ENCODE measurements at regions of chr11 and their contacts with region 1.

Region 1: DNA sequence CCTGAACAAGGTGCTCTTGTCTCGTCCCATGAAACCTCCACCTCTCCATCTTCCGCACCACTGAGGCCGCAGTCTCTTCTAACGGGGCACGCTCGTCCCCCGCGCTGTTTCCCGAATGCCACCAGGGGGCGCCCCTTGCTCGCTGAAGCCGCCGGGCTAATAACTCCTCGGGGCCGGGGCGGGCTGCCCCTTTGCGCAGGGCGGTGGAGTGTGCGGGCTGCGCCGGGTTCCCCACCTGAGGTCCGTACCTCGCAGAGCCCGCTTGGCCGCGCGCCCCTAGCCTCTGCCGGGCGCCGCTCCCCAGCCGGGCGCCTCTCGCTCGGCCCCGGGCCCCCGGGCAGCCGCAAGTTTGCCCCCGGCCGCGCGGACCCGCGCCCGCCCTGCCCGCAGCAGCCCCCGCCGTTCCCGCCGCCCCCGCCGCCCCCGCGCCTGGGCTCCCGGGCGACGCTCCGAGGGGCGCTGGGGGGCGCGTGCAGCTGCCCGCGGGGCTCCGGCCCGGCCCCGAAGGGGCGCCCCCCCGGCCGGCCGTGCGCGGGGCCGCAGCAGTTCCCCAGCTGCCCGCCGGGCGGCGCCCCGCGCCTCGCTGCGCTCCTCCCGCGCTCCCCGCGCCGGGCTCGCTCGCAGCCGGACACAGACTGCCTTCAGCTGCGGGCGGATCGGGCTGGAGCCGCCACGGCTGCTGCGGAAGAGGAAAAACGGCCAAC is at the start of gene GRIK4:
- DNase-seq: peak; percentile 84
- H3K4me3 ChIP-seq: peak within 1 kb of the TSS; percentile 16
- H3K27ac ChIP-seq: no peak within 1 kb of the TSS
- H3K4me1 ChIP-seq: no peaks in the 10 kb centered on the region
- H3K27me3 ChIP-seq: peaks cover 29% of the 10 kb centered on the region
- CTCF ChIP-seq: peak; percentile 87
- total RNA-seq, gene GRIK4: 0.10 to 0.21 TPM

Region 2: DNA sequence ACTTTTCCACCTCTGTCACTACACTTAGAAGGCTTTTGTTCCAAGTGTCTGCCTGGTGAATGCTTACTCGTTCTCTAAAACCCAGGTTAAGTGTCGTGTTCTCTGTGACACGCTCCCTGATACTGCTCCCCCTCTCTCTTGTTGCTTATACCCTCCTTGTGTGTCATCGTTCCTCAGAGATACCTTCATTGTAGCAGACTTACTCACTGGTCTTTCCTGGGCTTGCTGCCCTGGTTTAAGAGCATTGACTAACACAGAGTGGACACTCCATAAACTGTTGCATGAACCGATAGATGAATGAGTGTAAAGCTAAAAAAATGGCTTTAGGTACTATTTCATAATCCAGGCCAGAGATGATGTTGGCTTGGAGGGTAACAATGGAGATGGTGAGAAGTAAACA is 171.6 kb after region 1 on chr11:
- intact Hi-C with region 1: loop called (anchors 2 kb)
- DNase-seq: no peak
- H3K4me3 ChIP-seq: no peak overlapping the region
- H3K27ac ChIP-seq: no peak overlapping the region
- H3K4me1 ChIP-seq: no peaks in the 10 kb centered on the region
- H3K27me3 ChIP-seq: no peaks in the 10 kb centered on the region
- CTCF ChIP-seq: no peak

Region 3: GRCh38 chr11:120801801-120802689 is 290.8 kb after region 1 on chr11:
- intact Hi-C with region 1: loop called (anchors 10 kb)
- DNase-seq: peak; percentile 65
- H3K4me3 ChIP-seq: no peak overlapping the region
- H3K27ac ChIP-seq: no peak overlapping the region
- H3K4me1 ChIP-seq: no peaks in the 10 kb centered on the region
- H3K27me3 ChIP-seq: no peaks in the 10 kb centered on the region
- CTCF ChIP-seq: peak; percentile 92

Region 4: GRCh38 chr11:120952461-120953434 is 441.5 kb after region 1 on chr11:
- intact Hi-C with region 1: loop called (anchors 2 kb)
- DNase-seq: peak; percentile 80
- H3K4me3 ChIP-seq: no peak overlapping the region
- H3K27ac ChIP-seq: no peak overlapping the region
- H3K4me1 ChIP-seq: no peaks in the 10 kb centered on the region
- H3K27me3 ChIP-seq: peaks cover 5% of the 10 kb centered on the region
- CTCF ChIP-seq: peak; percentile 55

Region 5: GRCh38 chr11:121194731-121195596 is 683.7 kb after region 1 on chr11:
- intact Hi-C with region 1: loop called (anchors 10 kb)
- DNase-seq: peak; percentile 62
- H3K4me3 ChIP-seq: no peak overlapping the region
- H3K27ac ChIP-seq: no peak overlapping the region
- H3K4me1 ChIP-seq: no peaks in the 10 kb centered on the region
- H3K27me3 ChIP-seq: peaks cover 6% of the 10 kb centered on the region
- CTCF ChIP-seq: peak; percentile 77

Measured in colonic mucosa (tissue), 4 donors.